HCT116 (cell line): ENCODE measurements at regions of chr3 and their contacts with region 1.

Region 1: DNA sequence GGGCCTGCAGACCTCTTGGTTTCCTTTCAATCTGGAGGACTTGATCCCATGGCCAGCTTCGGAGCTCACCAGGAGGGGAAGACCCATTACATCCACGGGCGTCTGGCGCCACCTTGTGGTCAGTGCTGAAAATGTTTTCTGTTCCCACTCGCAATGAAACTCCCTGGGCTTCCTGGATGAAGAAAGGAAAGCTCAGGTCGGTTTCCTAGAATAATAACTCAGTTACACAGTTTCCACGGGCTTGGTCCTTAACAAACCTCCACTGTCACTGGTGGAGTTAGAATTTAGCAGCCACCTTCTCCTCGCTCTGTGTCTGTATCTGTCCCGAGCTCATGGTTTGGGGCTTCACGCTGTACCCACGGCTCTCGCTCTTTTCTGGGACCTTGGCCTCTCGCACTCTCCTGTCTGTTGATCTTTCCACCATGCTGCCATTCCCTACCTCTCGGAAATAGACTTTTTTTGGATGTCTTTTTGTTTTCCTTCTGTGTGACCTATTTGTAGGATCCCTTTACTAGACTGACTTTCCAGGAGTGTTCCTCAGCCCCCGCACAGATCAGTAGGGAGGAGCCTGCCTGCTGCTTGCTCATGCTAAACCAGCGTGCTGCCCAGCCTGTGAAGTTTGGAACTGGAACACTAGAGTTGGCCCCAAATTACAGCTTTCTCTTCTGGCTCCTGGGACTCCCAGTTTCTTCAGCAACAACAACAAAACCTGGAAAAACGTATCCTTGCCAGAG is 56.3 kb downstream of the IL20RB start:
- DNase-seq: peak; percentile 63
- ATAC-seq: peak; percentile 93
- H3K4me3 ChIP-seq: no peak overlapping the region
- H3K27ac ChIP-seq: no peak overlapping the region
- H3K4me1 ChIP-seq: peaks cover 0 to 6% of the 10 kb centered on the region in 2 experiments; a peak in 1 of 4 replicates
- H3K27me3 ChIP-seq: no peaks in the 10 kb centered on the region
- CTCF ChIP-seq: peak; percentile 72 to 90 (median 87)
- POLR2A ChIP-seq: no peak
- RAD21 ChIP-seq: peak; percentile 99

Region 2: DNA sequence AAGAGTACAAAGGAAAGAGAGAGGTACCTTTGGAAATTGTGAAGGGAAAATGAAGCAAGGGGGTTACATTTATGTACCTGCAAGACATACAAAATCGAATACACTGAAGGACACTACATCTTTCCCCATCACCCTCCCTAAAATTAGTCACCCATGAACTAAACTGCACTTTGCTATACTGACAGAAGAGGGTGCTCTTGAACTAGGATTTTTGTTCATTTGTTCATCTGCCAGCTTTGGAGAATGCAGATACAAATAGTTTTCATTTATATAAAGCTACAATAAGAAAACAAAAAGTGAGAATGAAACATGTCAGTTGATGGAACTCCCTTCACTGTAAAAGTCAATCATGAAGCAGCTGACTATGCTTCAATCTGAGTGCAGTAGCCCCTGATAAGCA is 708.2 kb before region 1 on chr3:
- CTCF ChIA-PET with region 1: interaction called, 15 read pairs
- POLR2A ChIA-PET with region 1: no interaction called
- RAD21 ChIA-PET with region 1: interaction called, 3 to 5 read pairs
- intact Hi-C with region 1: loop called (anchors 1 kb)
- DNase-seq: peak; percentile 32
- ATAC-seq: peak; percentile 74
- H3K4me3 ChIP-seq: no peak overlapping the region
- H3K27ac ChIP-seq: no peak overlapping the region
- H3K4me1 ChIP-seq: no peaks in the 10 kb centered on the region
- H3K27me3 ChIP-seq: no peaks in the 10 kb centered on the region
- CTCF ChIP-seq: peak; percentile 62 to 76 (median 75); a peak in 5 of 6 replicates
- POLR2A ChIP-seq: no peak
- RAD21 ChIP-seq: peak; percentile 79

Region 3: GRCh38 chr3:136390574-136390973 is 623.5 kb before region 1 on chr3:
- CTCF ChIA-PET with region 1: interaction called, 15 read pairs
- POLR2A ChIA-PET with region 1: no interaction called
- RAD21 ChIA-PET with region 1: no interaction called
- intact Hi-C with region 1: loop called (anchors 5 kb)
- DNase-seq: no peak
- ATAC-seq: no peak
- H3K4me3 ChIP-seq: no peak overlapping the region
- H3K27ac ChIP-seq: no peak overlapping the region
- H3K4me1 ChIP-seq: peaks cover 0 to 2% of the 10 kb centered on the region in 2 experiments; a peak in 1 of 4 replicates
- H3K27me3 ChIP-seq: no peaks in the 10 kb centered on the region
- CTCF ChIP-seq: no peak
- POLR2A ChIP-seq: no peak
- RAD21 ChIP-seq: no peak

Region 4: DNA sequence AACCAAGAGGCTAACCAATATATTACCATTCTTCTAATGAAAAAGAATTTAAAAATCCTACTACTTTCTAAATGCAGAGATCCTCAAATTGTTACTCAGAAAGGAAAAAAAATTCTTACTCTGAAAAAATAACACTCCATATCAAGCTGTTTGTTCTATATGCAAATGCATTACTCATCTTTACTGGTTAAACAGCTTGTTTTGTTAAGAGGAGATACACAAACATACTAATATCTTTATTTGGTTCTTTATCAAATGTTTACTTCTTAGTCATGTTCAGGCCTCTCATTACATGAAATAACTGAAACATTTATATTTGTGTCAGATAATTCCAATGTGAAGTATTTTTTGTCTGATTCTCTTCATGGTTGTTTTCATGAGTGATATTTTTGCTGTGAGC is 617.2 kb before region 1 on chr3:
- CTCF ChIA-PET with region 1: interaction called, 15 read pairs
- POLR2A ChIA-PET with region 1: no interaction called
- RAD21 ChIA-PET with region 1: no interaction called
- intact Hi-C with region 1: loop called (anchors 5 kb)
- DNase-seq: no peak
- ATAC-seq: no peak
- H3K4me3 ChIP-seq: no peak overlapping the region
- H3K27ac ChIP-seq: no peak overlapping the region
- H3K4me1 ChIP-seq: no peaks in the 10 kb centered on the region; a peak in 1 of 4 replicates
- H3K27me3 ChIP-seq: no peaks in the 10 kb centered on the region
- CTCF ChIP-seq: no peak
- POLR2A ChIP-seq: no peak
- RAD21 ChIP-seq: no peak

Region 5: DNA sequence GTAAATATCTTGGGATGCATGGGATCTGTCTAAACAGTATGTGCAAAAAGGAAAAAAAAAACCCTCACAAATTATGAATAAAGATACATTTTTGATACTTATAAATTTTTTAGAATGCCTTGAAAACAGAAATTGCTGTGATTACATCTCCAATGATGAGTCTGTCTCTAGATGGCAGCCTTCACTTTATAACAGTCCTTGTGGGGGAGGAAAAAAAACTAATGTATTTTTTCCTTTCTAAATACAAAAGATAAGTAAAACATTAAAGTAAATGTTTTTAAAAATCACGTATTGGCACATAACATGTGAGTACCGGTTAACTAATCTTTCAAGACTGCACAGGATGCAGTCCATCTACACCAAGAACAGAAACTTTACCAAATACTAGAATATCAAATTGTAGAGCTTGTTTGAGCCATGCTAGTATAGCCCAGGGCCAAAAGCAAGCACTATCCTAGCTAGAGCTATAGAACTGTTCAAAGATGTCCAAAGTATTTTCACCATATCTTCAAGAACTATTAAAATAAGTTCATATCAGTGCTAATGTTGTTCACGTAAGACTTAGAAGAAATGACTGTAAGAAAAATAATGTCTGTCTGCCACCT is 468.4 kb before region 1 on chr3:
- CTCF ChIA-PET with region 1: interaction called, 17 read pairs
- POLR2A ChIA-PET with region 1: no interaction called
- RAD21 ChIA-PET with region 1: no interaction called
- intact Hi-C with region 1: loop called (anchors 5 kb)
- DNase-seq: no peak
- ATAC-seq: no peak
- H3K4me3 ChIP-seq: no peak overlapping the region
- H3K27ac ChIP-seq: no peak overlapping the region
- H3K4me1 ChIP-seq: peaks cover 0 to 7% of the 10 kb centered on the region in 2 experiments; a peak in 1 of 4 replicates
- H3K27me3 ChIP-seq: no peaks in the 10 kb centered on the region
- CTCF ChIP-seq: peak in 2 of 3 experiments; percentile 11 to 87; a peak in 3 of 6 replicates
- POLR2A ChIP-seq: no peak
- RAD21 ChIP-seq: peak; percentile 68

Region 6: DNA sequence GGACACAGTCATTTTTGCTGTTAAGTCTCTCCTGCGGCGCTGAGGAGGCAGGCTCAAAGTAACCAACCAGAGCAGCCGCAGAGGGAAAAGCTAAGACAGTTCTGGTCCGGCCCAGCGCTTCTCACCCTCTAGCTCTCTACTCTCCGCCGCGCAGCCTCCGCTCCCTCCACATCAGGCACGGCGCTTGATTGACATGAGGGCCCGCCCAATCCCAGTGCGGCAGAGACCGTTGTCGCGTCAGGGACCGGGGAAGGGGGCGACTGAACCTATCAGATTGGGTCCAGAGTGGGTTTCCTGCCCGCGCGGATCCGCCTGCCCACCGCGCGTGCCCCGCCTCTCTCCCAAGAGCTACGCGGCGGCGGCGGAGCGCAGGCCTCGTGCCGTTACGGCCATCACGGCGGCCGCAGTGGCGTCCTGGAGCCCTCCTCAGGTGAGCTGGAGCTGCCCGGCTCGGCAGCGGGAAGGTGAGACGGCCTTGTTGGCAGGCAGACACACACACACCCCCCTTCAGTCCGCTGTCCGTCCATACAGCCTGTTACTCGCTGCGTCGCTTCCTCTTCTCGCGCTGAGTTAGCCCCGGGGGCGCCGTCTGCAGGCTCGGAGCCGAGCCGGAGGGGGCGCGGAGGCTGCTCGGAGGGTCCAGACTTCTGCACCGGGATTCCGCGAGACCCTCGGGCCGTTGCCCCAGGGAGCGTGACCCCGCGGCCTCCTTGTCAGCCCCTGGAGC is 152.1 kb before region 1 on chr3 and contains the start of gene NCK1:
- CTCF ChIA-PET with region 1: interaction called, 10 read pairs
- POLR2A ChIA-PET with region 1: no interaction called
- RAD21 ChIA-PET with region 1: interaction called in 1 of 2 experiments, 4 read pairs
- intact Hi-C with region 1: no loop called
- DNase-seq: peak; percentile 94
- ATAC-seq: peak; percentile 97
- H3K4me3 ChIP-seq: peak within 1 kb of the TSS; percentile 89 to 97
- H3K27ac ChIP-seq: peak within 1 kb of the TSS; percentile 90
- H3K4me1 ChIP-seq: peaks cover 9 to 20% of the 10 kb centered on the region in 2 experiments; a peak in 3 of 4 replicates
- H3K27me3 ChIP-seq: no peaks in the 10 kb centered on the region
- CTCF ChIP-seq: peak in 2 of 3 experiments; percentile 12 to 17; a peak in 3 of 6 replicates
- POLR2A ChIP-seq: peak; percentile 82
- RAD21 ChIP-seq: peak; percentile 20; the same call in 1 of the 2 replicates
- total RNA-seq, gene NCK1: 25.6 TPM

Region 7: GRCh38 chr3:136949708-136950107 is 64.4 kb before region 1 on chr3:
- CTCF ChIA-PET with region 1: interaction called, 7 read pairs
- POLR2A ChIA-PET with region 1: no interaction called
- RAD21 ChIA-PET with region 1: interaction called in 1 of 2 experiments, 5 read pairs
- intact Hi-C with region 1: loop called (anchors 2 kb)
- DNase-seq: no peak
- ATAC-seq: no peak
- H3K4me3 ChIP-seq: no peak overlapping the region
- H3K27ac ChIP-seq: no peak overlapping the region
- H3K4me1 ChIP-seq: peaks cover 2 to 15% of the 10 kb centered on the region in 2 experiments; a peak in 3 of 4 replicates
- H3K27me3 ChIP-seq: no peaks in the 10 kb centered on the region
- CTCF ChIP-seq: peak in 2 of 3 experiments; percentile 23 to 30; a peak in 2 of 6 replicates
- POLR2A ChIP-seq: no peak
- RAD21 ChIP-seq: peak; percentile 51; the same call in 1 of the 2 replicates